HepG2 (cell line): ENCODE measurements at regions of chr12 and their contacts with region 1.

Region 1: DNA sequence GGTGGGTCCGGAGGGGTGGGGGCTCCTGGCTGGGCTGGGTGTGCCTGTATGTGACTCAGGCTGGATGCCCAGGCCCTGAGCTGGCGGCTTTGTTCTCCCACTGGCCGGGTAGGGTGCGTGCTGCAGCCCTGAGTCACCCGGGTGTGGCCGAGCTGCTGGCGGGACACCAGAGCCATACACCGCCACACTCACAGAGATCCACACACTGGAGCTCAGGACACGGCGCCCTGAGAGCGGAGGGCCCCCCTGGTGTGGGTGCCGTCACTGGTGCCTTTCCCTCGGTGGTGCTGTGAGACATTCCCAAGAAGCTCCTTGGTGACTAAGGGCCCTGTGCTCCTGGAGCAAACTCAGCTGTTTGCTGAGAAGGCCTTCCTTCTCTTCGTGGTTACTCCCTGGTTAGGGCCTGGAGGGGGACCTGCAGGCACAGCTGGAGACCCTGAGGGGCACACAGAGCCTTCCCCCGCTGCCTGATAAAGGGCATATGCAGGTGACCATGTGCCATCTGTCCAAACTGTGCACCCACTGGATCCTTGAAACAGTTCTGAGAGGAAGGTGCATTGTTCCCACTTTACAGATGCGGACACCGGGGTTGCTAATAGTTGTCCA is 44.3 kb downstream of the KRT80 start:
- DNase-seq: peak; percentile 67
- ATAC-seq: peak; percentile 75
- H3K4me3 ChIP-seq: peak overlapping the region in 1 of 3 experiments; percentile 10; a peak in 1 of 6 replicates
- H3K27ac ChIP-seq: no peak overlapping the region
- H3K4me1 ChIP-seq: peaks cover 7% of the 10 kb centered on the region; the same call in 1 of the 2 replicates
- H3K27me3 ChIP-seq: peaks cover 1 to 9% of the 10 kb centered on the region in 2 experiments; a peak in 2 of 5 replicates
- CTCF ChIP-seq: no peak
- EP300 ChIP-seq: 0 out of 4 replicates have a peak, but pooled peaks of 1 of the 2 experiments have one; percentile 8
- POLR2A ChIP-seq: no peak
- RAD21 ChIP-seq: no peak

Region 2: DNA sequence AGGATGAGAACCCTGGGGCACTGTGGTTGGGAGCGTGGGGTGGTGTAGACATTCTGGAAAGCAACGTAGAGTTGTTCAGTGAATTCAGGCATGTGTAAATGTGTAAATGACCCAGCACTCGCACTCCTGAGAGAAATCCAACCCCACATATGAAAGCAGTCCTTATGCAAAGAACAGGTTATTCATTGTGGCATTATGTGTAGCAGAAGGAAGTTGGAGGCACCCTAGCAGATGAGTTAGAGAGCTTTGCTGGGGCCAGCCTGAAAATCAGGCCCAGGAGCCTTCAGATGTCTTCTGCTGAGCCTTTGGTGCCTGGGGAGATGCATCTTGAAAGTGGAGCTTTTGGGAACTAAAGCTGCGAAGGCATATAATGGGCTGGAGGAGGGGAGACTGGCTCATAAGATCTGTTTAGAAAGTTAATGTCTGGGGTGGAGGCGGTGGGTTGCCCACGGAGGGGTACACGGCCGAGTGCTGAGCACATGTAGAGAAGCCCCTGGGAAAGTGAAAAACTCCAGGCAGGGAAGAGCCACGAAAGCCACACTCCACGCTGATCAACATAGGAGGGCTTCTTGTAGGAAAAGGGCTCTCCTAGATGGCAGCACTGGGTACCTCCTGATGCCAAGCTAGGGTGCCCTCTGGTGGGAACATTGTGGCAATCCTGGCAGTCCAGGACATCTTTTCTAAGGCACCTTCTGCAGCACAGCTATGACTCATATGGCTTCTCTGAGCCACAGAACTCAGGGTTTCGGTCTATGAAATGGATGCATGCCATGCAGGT is 179.8 kb after region 1 on chr12:
- CTCF ChIA-PET with region 1: interaction called, 7 read pairs
- POLR2A ChIA-PET with region 1: no interaction called
- in situ Hi-C with region 1: loop called (anchors 5 kb)
- intact Hi-C with region 1: no loop called
- DNase-seq: peak; percentile 78
- ATAC-seq: peak; percentile 97
- H3K4me3 ChIP-seq: no peak overlapping the region
- H3K27ac ChIP-seq: no peak overlapping the region
- H3K4me1 ChIP-seq: no peaks in the 10 kb centered on the region
- H3K27me3 ChIP-seq: peaks cover 3 to 13% of the 10 kb centered on the region in 2 experiments; a peak in 3 of 5 replicates
- CTCF ChIP-seq: peak; percentile 84
- EP300 ChIP-seq: no peak
- POLR2A ChIP-seq: no peak
- RAD21 ChIP-seq: peak; percentile 76